ENCODE measurements at regions of chr16 and their contacts with region 1.

Region 1: GRCh38 chr16:68040507-68041288 is 17.6 kb downstream of the DUS2 start:
- DNase-seq: peak; percentile 81
- H3K4me3 Mint-ChIP-seq: no peak overlapping the region
- H3K27ac Mint-ChIP-seq: peak overlapping the region; percentile 70
- H3K4me1 Mint-ChIP-seq: peaks cover 19% of the 10 kb centered on the region
- H3K27me3 Mint-ChIP-seq: no peaks in the 10 kb centered on the region

Region 2: DNA sequence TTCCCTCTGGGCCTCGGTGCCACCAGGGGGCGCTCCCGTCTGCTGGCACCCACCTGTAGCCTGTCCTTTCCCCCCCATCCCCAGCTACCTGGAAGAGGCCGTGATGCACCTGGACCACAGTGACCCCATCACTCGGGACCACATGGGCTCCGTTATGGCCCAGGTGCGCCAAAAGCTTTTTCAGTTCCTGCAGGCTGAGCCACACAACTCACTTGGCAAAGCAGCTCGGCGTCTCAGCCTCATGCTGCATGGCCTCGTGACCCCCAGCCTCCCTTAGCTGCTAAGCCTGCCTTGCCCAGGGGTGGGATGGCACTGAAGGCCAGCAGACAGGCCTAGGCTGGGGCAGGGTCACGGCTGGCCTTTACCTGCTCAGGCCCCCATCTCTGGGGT is 156.8 kb before region 1 on chr16:
- intact Hi-C with region 1: loop called (anchors 1 kb)
- DNase-seq: peak; percentile 56
- H3K4me3 Mint-ChIP-seq: no peak overlapping the region
- H3K27ac Mint-ChIP-seq: no peak overlapping the region
- H3K4me1 Mint-ChIP-seq: no peaks in the 10 kb centered on the region
- H3K27me3 Mint-ChIP-seq: no peaks in the 10 kb centered on the region

Region 3: DNA sequence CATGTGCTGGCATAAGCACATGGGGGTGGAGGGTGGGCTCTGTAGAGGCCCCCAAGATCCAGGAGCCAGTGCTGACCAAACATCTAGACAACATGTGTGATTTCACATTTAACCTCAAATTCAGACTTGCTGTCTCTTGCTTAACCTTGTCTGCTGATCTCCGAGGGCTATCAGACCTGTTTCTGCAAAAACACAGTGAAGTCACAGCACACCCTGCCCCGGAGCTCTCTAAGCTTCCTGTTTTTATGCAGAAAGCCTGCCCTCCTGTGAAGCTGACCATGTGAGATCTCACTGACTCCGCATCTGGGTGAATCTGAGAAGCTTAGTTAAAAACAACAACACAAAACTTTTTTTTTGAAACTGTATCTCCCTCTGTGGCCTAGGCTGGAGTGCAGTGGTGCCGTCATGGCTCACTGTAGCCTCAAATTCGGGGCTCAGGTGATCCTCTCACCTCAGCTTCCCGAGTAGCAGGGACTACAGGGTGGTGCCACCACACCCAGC is 34.9 kb before region 1 on chr16:
- intact Hi-C with region 1: no loop called
- DNase-seq: peak; percentile 42
- H3K4me3 Mint-ChIP-seq: peak overlapping the region; percentile 48
- H3K27ac Mint-ChIP-seq: peak overlapping the region; percentile 91
- H3K4me1 Mint-ChIP-seq: peaks cover 20% of the 10 kb centered on the region
- H3K27me3 Mint-ChIP-seq: no peaks in the 10 kb centered on the region

Region 4: DNA sequence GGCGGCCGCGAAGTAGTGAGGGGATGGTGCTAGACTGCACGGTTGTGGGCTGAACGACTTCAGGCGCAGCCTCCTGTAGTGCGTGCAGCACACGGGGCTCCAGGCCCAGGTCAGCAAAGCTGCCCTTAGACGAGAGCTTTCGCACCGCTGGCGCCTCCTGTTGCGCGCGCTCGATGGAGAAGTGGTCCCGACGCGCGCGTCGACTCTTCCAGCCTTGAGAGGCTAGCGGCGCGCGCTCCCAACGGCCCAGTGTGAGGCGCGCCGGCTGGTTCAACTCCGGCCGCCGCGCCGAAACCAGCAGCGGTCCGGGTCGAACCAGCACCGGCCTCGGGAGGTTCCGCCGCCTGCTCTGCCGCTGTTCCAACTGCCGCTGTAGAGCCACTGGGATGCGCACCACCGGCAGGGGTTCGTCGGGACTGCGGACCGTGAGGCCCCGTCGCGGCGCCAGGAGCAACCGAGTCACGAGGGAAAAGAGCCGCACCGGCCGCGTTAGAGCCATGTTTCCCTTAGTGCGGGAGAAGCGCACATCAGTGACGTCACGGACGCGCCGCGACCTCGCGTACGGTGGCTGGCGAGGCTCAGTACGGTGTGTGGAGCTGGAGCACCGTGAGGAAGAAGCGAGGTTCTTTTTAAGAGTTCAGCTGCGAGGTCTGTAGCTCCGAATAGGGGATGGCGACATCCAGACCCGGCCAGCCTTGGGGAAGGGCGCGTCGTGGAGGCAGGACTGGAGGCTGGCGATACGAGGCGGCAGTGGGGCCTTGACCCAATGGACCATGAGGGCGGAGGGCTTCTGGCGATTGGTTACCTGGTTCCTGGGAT is 17.8 kb before region 1 on chr16 and contains the starts of genes DDX28 and DUS2:
- intact Hi-C with region 1: loop called (anchors 1 kb)
- DNase-seq: peak; percentile 93
- H3K4me3 Mint-ChIP-seq: peak within 1 kb of the TSS; percentile 100
- H3K27ac Mint-ChIP-seq: peak within 1 kb of the TSS; percentile 96
- H3K4me1 Mint-ChIP-seq: peaks cover 26% of the 10 kb centered on the region
- H3K27me3 Mint-ChIP-seq: no peaks in the 10 kb centered on the region
- total RNA-seq, gene DDX28: 28.2 and 28.4 TPM in 2 replicates
- total RNA-seq, gene DUS2: 34.7 and 37.2 TPM in 2 replicates

Region 5: DNA sequence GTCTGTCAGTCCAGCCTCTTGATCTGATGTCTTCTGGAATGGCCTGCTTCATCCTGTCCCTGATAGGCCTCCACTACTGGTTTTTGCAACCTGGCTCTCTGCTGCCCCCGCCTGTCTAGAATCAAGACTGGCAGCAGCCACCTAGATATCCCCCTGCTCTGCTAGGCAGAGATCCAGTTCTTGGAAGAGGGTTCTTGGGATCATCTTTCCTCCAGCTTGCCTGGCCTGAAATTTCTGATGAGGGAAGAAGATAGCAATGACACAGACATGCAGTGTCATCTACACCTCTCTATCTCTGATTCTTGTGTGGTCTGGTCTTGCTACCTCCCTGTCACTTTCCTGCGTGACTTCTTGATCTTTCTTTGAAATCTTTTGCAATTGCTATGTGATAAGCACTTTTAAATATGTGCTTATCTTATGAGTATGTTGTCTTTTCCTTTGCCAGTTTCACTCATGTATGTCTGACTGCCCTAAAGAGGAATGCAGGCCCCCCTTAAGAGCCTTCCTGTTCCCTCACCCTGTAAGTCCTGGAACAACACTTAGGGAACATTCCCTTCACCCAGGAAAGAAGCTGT is 24.2 kb after region 1 on chr16:
- intact Hi-C with region 1: loop called (anchors 2 kb)
- DNase-seq: peak; percentile 59
- H3K4me3 Mint-ChIP-seq: no peak overlapping the region
- H3K27ac Mint-ChIP-seq: peak overlapping the region; percentile 75
- H3K4me1 Mint-ChIP-seq: peaks cover 81% of the 10 kb centered on the region
- H3K27me3 Mint-ChIP-seq: no peaks in the 10 kb centered on the region